Caco-2 (cell line): ENCODE measurements at regions of chr15 and their contacts with region 1.

Region 1: DNA sequence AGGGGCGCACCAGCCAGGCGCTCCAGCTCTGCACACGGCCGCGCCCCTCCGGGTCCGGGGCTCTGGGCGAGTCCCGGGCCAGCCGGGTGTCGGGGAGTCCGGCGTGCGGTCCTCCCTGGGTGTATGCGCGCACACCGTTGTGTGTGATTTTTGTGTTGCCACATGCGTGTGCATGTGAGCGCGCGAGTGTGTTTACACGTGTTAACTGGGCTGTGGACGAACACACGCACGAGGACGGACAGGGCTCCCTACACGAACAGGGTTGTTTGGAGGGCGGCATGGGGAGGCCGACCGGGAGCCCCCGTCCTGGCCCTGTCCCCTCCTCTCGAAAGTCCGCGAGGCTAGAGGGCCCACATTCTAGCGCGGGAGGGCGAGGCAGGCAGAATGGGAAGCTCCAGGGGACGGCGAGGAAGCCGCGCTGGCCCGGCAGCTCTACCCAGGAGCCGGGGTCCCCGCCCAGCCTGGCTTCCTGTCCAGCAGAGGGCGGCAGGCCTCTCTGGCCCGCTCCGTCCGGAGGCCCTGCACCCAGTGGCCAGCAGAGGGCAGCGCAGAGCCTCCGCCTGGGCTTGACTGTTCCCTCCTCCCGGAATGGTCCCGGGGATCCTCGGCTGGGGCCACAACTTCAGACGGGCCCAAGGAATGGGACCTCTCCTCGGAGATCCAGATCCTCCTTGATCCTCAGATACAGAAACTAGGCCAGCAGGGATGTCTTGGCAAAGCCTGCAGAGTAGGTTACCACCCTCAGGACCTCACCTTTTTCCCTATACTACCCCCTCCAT is 611 bp upstream of the LINGO1 start:
- DNase-seq: peak; percentile 80 to 93
- H3K4me3 ChIP-seq: peak overlapping the region; percentile 36
- H3K4me3 Mint-ChIP-seq: peak overlapping the region; percentile 63
- H3K27ac Mint-ChIP-seq: no peak overlapping the region
- H3K4me1 ChIP-seq: peaks cover 6% of the 10 kb centered on the region; the same call in 1 of the 2 replicates
- H3K4me1 Mint-ChIP-seq: no peaks in the 10 kb centered on the region
- H3K27me3 ChIP-seq: peaks cover 6% of the 10 kb centered on the region
- H3K27me3 Mint-ChIP-seq: peaks cover 12% of the 10 kb centered on the region
- CTCF ChIP-seq: peak; percentile 99 to 100

Region 2: DNA sequence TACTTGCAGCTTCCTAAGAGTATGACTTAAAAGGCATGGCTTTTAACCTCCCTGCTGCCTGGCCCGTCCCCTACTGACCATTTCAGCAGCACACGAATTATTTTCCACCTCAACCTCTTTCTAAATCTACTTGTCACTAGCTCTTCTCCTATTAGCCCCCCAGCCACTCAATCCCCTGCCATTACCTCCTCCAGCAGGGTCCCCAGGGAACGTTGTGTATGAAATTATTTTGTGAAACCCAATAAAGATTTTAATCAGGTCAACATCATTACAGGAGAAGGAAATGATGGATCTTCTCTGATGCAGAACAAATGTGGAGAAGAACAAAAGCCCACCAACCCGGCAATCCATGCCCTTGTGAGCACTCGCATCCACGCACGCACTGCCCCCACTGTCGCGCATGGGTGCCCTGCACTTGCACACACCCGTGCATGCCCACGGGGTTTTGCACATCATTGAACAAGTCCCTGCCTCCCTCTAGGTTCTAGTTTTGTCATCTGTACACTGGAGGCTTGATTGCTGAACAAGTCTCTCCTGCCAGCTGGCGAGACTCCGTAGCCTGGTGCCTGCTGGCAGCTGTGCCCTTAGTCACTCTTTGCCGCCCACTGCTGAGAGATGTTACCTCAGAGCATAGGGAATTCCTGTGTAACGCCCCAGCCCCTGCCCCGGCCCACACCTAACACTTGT is 52.2 kb before region 1 on chr15:
- CTCF ChIA-PET with region 1: no interaction called
- POLR2A ChIA-PET with region 1: no interaction called
- intact Hi-C with region 1: no loop called
- DNase-seq: no peak
- H3K4me3 ChIP-seq: no peak overlapping the region
- H3K4me3 Mint-ChIP-seq: no peak overlapping the region
- H3K27ac Mint-ChIP-seq: no peak overlapping the region
- H3K4me1 ChIP-seq: no peaks in the 10 kb centered on the region
- H3K4me1 Mint-ChIP-seq: no peaks in the 10 kb centered on the region
- H3K27me3 ChIP-seq: no peaks in the 10 kb centered on the region
- H3K27me3 Mint-ChIP-seq: no peaks in the 10 kb centered on the region
- CTCF ChIP-seq: no peak

Region 3: GRCh38 chr15:77617476-77618230 is 15.7 kb before region 1 on chr15:
- CTCF ChIA-PET with region 1: interaction called, 18 read pairs
- POLR2A ChIA-PET with region 1: no interaction called
- intact Hi-C with region 1: no loop called
- DNase-seq: peak in 1 of 2 experiments; percentile 41
- H3K4me3 ChIP-seq: no peak overlapping the region
- H3K4me3 Mint-ChIP-seq: no peak overlapping the region
- H3K27ac Mint-ChIP-seq: no peak overlapping the region
- H3K4me1 ChIP-seq: peaks cover 11% of the 10 kb centered on the region
- H3K4me1 Mint-ChIP-seq: peaks cover 7% of the 10 kb centered on the region
- H3K27me3 ChIP-seq: no peaks in the 10 kb centered on the region
- H3K27me3 Mint-ChIP-seq: no peaks in the 10 kb centered on the region
- CTCF ChIP-seq: peak; percentile 28 to 55

Region 4: GRCh38 chr15:77650265-77650664 is 16.9 kb after region 1 on chr15:
- CTCF ChIA-PET with region 1: interaction called, 17 read pairs
- POLR2A ChIA-PET with region 1: no interaction called
- intact Hi-C with region 1: no loop called
- DNase-seq: peak in 1 of 2 experiments; percentile 42
- H3K4me3 ChIP-seq: no peak overlapping the region
- H3K4me3 Mint-ChIP-seq: no peak overlapping the region
- H3K27ac Mint-ChIP-seq: no peak overlapping the region
- H3K4me1 ChIP-seq: no peaks in the 10 kb centered on the region
- H3K4me1 Mint-ChIP-seq: no peaks in the 10 kb centered on the region
- H3K27me3 ChIP-seq: no peaks in the 10 kb centered on the region
- H3K27me3 Mint-ChIP-seq: peaks cover 12% of the 10 kb centered on the region
- CTCF ChIP-seq: peak in 1 of 2 experiments; percentile 30

Region 5: DNA sequence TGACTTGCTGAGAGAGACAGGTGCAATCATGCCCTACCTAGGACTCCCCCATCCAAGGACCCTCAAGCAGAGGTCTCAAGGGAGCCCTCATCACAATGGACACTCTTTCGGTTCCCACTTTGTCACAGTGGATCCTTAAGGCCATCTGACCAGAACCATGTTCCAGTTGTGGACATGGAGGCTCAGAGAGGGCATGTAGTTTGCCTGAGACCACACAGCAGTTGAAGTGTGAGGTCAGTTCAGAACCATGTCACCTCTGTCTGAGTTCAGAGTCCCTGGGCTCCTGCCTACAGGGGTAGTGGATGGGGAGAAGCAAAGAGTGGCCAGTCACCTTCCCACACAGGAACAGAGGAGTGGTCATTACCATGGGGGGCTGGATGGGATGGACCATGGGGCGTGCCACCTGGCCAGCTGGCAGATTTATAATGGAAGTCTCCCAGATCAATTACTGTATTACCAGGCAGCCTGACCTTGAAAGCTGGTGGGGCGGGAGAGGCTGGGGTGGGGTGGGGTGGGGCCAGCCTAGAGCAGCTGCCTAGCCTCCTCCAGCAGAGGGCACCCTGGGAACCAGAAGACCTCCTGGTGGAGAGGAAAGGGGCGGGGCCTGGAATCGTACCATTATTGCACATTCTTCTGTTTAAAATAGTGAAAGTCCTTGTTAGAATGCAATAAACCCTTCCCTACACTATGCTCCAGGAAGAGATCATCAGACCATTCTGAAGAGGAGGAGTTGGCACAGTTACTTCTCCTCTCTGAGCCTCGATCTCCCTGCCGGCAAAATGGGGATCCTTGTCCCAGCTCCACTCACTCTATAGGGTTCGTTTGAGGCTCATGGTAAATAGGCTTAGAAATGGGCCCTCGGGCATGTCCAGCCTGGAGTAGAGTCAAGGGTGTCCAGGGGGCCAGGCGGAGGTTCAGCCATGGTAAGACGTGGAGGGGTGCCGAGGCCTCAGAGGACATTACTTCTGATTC is 26.3 kb after region 1 on chr15:
- CTCF ChIA-PET with region 1: interaction called, 17 read pairs
- POLR2A ChIA-PET with region 1: no interaction called
- intact Hi-C with region 1: no loop called
- DNase-seq: peak; percentile 66 to 71
- H3K4me3 ChIP-seq: no peak overlapping the region
- H3K4me3 Mint-ChIP-seq: no peak overlapping the region
- H3K27ac Mint-ChIP-seq: no peak overlapping the region
- H3K4me1 ChIP-seq: peaks cover 14% of the 10 kb centered on the region
- H3K4me1 Mint-ChIP-seq: peaks cover 7% of the 10 kb centered on the region
- H3K27me3 ChIP-seq: no peaks in the 10 kb centered on the region
- H3K27me3 Mint-ChIP-seq: no peaks in the 10 kb centered on the region
- CTCF ChIP-seq: peak; percentile 53 to 59

Region 6: DNA sequence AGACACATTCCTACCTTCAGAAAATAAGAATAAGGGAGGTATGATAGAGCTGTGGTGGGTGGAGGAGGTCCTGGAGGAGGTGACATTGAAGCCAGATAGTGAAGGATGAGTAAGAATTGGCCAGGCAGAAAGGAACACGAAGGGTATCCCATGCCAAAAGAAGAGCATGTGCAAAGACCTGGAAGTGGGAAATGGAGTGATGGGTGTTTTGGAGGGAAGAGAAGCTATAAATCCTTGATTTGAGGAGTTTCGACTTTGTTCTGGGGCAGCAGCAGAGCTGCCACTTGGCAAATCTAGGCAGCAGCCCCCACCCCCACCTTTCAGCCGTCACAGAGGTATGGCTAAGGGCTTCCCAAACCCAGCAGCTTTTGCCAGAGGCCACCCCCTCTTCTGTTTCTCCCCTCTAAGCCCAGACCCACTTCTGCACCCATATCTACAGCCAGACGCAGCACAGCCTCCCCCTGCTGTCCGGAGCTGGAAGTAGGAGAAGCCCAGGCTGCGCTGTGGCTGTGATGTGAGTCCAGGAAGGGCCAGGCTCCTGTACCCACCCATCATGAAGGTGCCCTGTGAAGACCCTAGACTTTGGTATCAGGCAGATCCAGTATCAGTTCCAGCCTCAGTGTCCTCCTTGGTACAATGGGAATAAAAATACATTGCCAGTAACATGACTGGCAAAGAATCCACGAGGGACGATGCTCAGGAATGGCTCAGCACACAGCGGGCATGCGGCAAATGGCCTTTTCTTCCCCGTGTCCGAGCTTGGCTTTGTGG is 188.1 kb after region 1 on chr15:
- CTCF ChIA-PET with region 1: interaction called, 34 read pairs
- POLR2A ChIA-PET with region 1: no interaction called
- intact Hi-C with region 1: loop called (anchors 1 kb)
- DNase-seq: peak; percentile 59 to 74
- H3K4me3 ChIP-seq: no peak overlapping the region
- H3K4me3 Mint-ChIP-seq: no peak overlapping the region
- H3K27ac Mint-ChIP-seq: no peak overlapping the region
- H3K4me1 ChIP-seq: 0 out of 2 replicates have a peak, but pooled peaks cover 4% of the 10 kb centered on the region
- H3K4me1 Mint-ChIP-seq: no peaks in the 10 kb centered on the region
- H3K27me3 ChIP-seq: peaks cover 3% of the 10 kb centered on the region
- H3K27me3 Mint-ChIP-seq: peaks cover 23% of the 10 kb centered on the region
- CTCF ChIP-seq: peak; percentile 71 to 89

Region 7: DNA sequence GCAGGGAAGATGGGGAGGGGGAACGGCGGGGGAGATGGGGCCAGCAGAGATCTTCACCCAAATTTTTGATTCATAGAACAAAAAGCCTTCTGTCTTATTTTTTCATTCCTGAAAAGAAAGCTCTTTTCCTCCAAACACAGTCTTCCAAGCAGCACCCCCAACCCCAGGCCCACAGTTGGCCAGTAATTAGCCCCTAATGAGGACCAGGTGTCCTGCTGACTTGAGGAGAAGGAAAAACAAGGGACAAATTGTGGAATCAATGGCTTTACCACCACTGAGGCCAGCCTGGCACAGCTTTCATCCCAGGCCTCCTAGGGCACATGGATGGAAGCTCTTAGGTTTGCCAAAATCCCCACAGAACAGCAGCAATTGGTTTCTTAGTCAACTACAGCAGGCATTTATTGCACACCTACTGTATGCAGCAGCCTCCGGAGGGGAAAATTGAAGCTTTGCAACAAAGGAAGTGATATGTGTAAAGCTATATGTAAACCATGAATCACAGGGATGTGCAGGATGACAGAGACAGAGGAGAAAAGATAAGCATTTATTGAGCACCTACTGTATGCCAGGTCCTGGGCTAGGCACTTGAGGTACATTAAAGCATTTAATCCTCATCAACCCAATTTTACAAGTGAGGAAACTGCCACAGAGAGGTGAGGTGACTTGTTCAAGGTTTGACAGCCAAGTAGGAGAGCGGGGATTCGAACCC is 244.7 kb after region 1 on chr15:
- CTCF ChIA-PET with region 1: interaction called, 5 read pairs
- POLR2A ChIA-PET with region 1: no interaction called
- intact Hi-C with region 1: loop called (anchors 5 kb)
- DNase-seq: no peak
- H3K4me3 ChIP-seq: no peak overlapping the region
- H3K4me3 Mint-ChIP-seq: no peak overlapping the region
- H3K27ac Mint-ChIP-seq: no peak overlapping the region
- H3K4me1 ChIP-seq: no peaks in the 10 kb centered on the region
- H3K4me1 Mint-ChIP-seq: no peaks in the 10 kb centered on the region
- H3K27me3 ChIP-seq: no peaks in the 10 kb centered on the region
- H3K27me3 Mint-ChIP-seq: no peaks in the 10 kb centered on the region
- CTCF ChIP-seq: no peak